Dendritic cell treated with granulocyte-macrophage colony-stimulating factor and Interleukin-4, amounts not matched to agents 40 ng/mL and 50 ng/mL, for 4 days (primary cell): ENCODE measurements at regions of chr3 and their contacts with region 1.

Region 1: DNA sequence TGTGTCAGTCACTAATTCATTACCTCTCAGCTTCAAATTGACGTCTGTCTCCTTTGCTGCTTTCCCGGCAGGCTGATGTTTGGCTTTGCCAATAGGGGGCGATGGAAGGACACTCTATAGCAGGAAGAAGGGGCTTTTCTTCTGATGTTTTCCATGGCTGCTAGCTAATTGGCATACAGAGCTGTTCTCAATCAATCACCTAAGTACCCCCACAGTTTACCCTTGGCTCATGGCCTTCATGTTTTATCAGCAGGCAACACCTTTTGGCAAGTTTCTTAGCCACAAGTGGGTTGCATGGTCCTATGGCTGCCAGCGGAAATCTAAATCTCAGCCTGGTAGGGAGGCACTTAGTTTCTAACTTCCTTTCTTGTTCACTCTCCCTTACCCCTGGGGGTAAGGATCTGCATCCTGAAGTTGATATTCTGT is 45.0 kb downstream of the ESYT3 start:
- H3K4me3 Mint-ChIP-seq: no peak overlapping the region
- H3K27ac Mint-ChIP-seq: no peak overlapping the region
- H3K4me1 Mint-ChIP-seq: no peaks in the 10 kb centered on the region
- H3K27me3 Mint-ChIP-seq: no peaks in the 10 kb centered on the region

Region 2: DNA sequence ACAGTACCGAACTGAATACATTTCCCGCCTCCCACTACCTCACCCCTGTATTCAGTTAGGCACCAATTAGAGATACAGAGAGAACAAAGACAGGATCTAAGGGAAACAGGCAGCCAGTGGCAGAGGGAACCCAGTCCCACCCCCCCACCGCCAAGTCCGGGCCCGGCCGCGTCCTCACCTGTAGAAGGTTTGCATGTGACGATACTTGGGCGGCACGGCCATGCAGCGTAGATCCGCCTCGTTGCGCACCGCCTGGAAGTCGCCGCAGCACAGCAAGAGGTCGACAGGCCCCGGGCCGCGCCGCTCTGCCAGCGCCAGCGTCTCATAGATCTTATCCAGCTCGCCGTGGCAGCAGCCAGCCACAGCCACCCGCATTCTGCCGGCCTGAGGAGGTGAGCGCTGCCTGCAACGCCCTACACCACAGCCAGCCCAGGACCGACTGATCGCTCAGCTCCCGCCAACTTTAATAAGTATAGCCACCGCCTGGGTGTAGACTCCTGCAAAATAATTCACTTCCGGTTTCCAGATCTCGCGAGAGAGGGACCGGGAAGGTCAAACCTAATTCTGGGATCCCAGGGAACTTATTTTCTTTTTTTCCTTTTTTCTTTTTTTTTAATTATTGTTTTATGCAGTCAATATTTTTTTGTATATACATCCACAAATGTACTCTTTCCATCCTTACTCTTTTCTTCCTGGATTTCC is 304.9 kb before region 1 on chr3 and contains the start of gene DBR1:
- intact Hi-C with region 1: no loop called
- H3K4me3 Mint-ChIP-seq: peak within 1 kb of the TSS; percentile 89
- H3K27ac Mint-ChIP-seq: peak within 1 kb of the TSS; percentile 92
- H3K4me1 Mint-ChIP-seq: peaks cover 21% of the 10 kb centered on the region
- H3K27me3 Mint-ChIP-seq: peaks cover 5% of the 10 kb centered on the region

Region 3: GRCh38 chr3:138928727-138929385 is 449.4 kb after region 1 on chr3:
- intact Hi-C with region 1: loop called (anchors 5 kb)
- H3K4me3 Mint-ChIP-seq: no peak overlapping the region
- H3K27ac Mint-ChIP-seq: no peak overlapping the region
- H3K4me1 Mint-ChIP-seq: no peaks in the 10 kb centered on the region
- H3K27me3 Mint-ChIP-seq: peaks cover 46% of the 10 kb centered on the region

Region 4: GRCh38 chr3:139421460-139421859 is 942.0 kb after region 1 on chr3:
- intact Hi-C with region 1: no loop called
- H3K4me3 Mint-ChIP-seq: no peak overlapping the region
- H3K27ac Mint-ChIP-seq: no peak overlapping the region
- H3K4me1 Mint-ChIP-seq: no peaks in the 10 kb centered on the region
- H3K27me3 Mint-ChIP-seq: no peaks in the 10 kb centered on the region